Activated CD4-positive, alpha-beta T cell treated with anti-CD3 and anti-CD28 coated beads, Interleukin-2, amount 10 ng/mL, durations not matched to agents 7 days and 5 days (primary cell): ENCODE measurements at regions of chr12 and their contacts with region 1.

Region 1: GRCh38 chr12:49110464-49111155 is at the start of gene LMBR1L:
- DNase-seq: peak; percentile 99
- H3K4me3 Mint-ChIP-seq: peak within 1 kb of the TSS; percentile 96
- H3K27ac Mint-ChIP-seq: peak within 1 kb of the TSS; percentile 94
- H3K4me1 Mint-ChIP-seq: peaks cover 25% of the 10 kb centered on the region
- H3K27me3 Mint-ChIP-seq: no peaks in the 10 kb centered on the region
- total RNA-seq, gene LMBR1L: 60.3 to 62.3 TPM

Region 2: GRCh38 chr12:49098035-49098451 is 12.6 kb before region 1 on chr12:
- CTCF ChIA-PET with region 1: interaction called, 47 read pairs
- POLR2A ChIA-PET with region 1: interaction called, 8 read pairs
- DNase-seq: peak; percentile 69
- H3K4me3 Mint-ChIP-seq: no peak overlapping the region
- H3K27ac Mint-ChIP-seq: no peak overlapping the region
- H3K4me1 Mint-ChIP-seq: peaks cover 18% of the 10 kb centered on the region
- H3K27me3 Mint-ChIP-seq: peaks cover 27% of the 10 kb centered on the region

Region 3: GRCh38 chr12:49138587-49138986 is 28.0 kb after region 1 on chr12:
- CTCF ChIA-PET with region 1: no interaction called
- POLR2A ChIA-PET with region 1: no interaction called
- DNase-seq: no peak
- H3K4me3 Mint-ChIP-seq: no peak overlapping the region
- H3K27ac Mint-ChIP-seq: no peak overlapping the region
- H3K4me1 Mint-ChIP-seq: peaks cover 8% of the 10 kb centered on the region
- H3K27me3 Mint-ChIP-seq: no peaks in the 10 kb centered on the region